ENCODE measurements at regions of chr12 and their contacts with region 1.

Region 1: DNA sequence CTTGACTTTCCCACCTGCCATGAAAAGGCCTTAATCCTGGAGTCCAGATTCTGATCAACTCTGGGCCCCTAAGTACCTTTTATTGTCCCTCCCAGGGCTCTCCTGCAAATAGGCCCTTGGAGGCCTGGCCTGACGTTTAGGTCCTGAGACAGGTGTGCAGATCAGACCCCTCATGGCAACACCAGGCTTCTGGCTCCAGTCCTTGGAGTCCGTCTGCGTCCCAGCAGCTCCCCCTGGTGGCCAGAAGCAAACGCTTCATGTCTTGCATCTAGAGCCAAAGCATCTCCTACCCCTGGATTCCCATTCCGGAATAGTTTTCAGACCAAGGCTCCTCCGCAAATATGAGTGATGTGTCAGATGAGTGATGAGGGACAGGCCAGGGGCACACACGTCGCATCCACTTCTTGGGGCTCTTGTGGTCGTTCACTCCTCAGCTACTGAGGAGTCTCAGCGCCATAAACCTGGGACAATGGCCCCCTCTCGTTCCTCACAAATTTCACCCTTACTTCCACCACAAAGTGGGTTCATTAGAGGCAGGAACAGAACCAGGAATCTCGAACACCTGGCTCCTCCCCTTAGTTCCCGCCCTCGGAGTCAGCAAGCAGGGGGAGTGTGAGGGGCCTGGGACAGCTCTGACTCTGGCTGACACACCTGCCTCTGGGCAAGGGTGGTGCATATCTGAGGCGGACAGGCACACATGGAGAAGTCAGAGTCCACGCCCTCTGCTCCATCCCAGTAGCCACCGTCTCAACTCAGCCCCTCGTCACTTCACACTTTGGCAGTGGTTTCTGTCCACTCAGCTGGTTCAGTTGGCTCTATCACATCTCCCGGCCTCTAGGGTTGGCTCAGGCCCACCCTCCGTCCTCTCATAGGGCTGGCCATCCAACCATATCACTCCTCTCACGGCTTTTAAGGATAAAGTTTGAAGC is 77.9 kb upstream of the PWP1 start:
- DNase-seq: peak; percentile 67 to 92 (median 82)
- H3K4me3 ChIP-seq: no peak overlapping the region
- H3K27ac ChIP-seq: no peak overlapping the region
- H3K4me1 ChIP-seq: no peaks in the 10 kb centered on the region
- H3K27me3 ChIP-seq: no peaks in the 10 kb centered on the region
- CTCF ChIP-seq: peak; percentile 80 to 96 (median 90)
- POLR2A ChIP-seq: no peak

Region 2: GRCh38 chr12:107131832-107132616 is 475.7 kb before region 1 on chr12:
- intact Hi-C with region 1: loop called (anchors 2 to 5 kb)
- DNase-seq: peak in 6 of 7 donors; percentile 16 to 52 (median 28)
- H3K4me3 ChIP-seq: no peak overlapping the region
- H3K27ac ChIP-seq: no peak overlapping the region
- H3K4me1 ChIP-seq: no peaks in the 10 kb centered on the region
- H3K27me3 ChIP-seq: no peaks in the 10 kb centered on the region
- CTCF ChIP-seq: peak; percentile 44 to 86 (median 82)
- POLR2A ChIP-seq: no peak

Region 3: DNA sequence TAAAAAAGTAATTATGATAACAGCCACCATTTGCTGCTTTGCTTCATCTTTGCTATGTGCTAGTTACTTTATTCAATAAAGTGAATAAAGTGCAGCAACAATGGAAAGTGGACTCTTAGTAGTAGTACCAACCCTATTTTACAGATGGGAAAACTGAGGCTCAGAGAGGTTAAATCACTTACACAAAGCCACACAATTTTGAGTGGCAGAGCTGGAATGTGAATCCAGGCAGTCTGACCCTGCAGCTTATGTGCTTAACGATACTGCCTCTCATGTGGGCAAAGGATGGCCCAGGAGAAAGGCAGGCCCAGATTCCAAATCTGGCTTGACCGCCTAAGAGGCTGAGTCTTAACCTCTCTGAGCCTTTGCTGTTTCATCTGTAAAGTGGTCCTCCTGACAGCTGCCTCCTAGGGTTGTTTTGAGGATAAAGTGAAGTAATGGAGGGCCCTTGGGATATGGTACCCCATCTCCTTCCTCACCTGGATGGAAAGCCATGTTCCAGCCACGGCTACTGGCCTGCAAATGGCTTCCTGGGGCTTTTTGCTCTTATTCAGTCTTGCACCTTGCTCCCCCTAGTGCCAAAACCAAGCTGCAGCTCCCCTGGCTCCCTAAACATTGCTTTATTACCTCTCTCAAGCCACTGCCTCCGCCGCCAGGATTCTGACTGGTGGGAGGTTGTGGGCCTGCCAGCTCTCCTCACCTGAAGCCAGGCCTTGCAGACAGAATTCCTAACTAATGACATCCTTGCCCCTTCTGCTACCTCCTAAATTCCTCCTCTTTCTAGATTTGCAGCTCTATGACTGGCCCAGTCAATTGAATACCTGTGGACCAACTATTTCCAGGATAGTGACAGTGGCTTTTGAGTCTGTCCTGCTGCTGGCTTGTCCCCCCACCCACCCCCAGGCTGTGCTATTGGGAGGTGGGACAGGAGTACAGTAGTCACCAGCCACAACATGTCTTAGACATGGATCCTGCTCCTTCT is 205.4 kb before region 1 on chr12:
- intact Hi-C with region 1: loop called (anchors 10 kb)
- DNase-seq: peak; percentile 42 to 80 (median 66)
- H3K4me3 ChIP-seq: no peak overlapping the region
- H3K27ac ChIP-seq: no peak overlapping the region
- H3K4me1 ChIP-seq: no peaks in the 10 kb centered on the region
- H3K27me3 ChIP-seq: no peaks in the 10 kb centered on the region
- CTCF ChIP-seq: peak; percentile 45 to 59 (median 54)
- POLR2A ChIP-seq: no peak

Region 4: GRCh38 chr12:107448198-107448597 is 159.5 kb before region 1 on chr12:
- intact Hi-C with region 1: loop called in 1 of 2 experiments (anchors 5 kb)
- DNase-seq: peak in 6 of 7 donors; percentile 26 to 64 (median 51)
- H3K4me3 ChIP-seq: no peak overlapping the region
- H3K27ac ChIP-seq: no peak overlapping the region
- H3K4me1 ChIP-seq: no peaks in the 10 kb centered on the region
- H3K27me3 ChIP-seq: no peaks in the 10 kb centered on the region
- CTCF ChIP-seq: peak; percentile 32 to 59 (median 50)
- POLR2A ChIP-seq: no peak

Region 5: DNA sequence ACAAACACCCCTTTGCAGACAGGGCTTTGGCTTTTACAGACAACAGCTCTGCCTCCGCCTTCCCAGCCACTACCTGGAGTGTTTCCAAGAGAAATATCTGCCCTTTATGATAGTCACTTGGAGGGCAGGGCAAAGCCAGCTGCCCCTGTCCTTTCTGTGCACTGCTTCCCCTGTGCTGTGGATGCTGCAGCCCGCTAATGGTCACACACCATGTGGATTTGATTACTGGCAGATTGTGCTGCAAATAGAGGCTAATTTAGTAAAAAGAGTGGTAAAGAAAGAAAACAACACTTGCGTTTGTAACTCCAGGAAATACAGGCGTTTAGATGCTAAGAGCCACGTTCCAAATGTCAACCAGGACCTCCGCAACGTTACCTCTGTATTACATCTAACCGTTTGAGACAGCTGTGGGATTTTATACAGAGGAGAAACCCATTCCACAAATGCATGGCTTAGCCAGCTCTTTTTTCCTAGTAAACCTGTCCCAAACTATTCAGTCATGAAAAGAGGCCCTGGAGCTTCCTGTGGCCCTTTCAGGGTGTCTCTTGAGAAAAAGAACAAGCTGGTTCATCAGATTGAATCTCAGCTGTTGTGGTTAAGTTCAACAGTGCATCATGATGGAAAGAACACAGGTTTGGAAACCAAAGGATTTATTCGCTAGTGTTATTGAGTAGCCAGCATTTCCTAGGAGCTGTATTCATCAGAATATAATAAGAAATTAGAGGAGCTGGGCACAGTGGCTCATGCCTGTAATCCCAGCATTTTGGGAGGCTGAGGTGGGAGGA is 47.7 kb after region 1 on chr12:
- intact Hi-C with region 1: no loop called
- DNase-seq: no peak
- H3K4me3 ChIP-seq: no peak overlapping the region
- H3K27ac ChIP-seq: no peak overlapping the region
- H3K4me1 ChIP-seq: no peaks in the 10 kb centered on the region
- H3K27me3 ChIP-seq: no peaks in the 10 kb centered on the region
- CTCF ChIP-seq: no peak
- POLR2A ChIP-seq: no peak

Region 6: GRCh38 chr12:107760809-107761501 is 153.2 kb after region 1 on chr12 and contains the start of gene PRDM4:
- intact Hi-C with region 1: no loop called
- DNase-seq: peak; percentile 93 to 97 (median 95)
- H3K4me3 ChIP-seq: peak within 1 kb of the TSS; percentile 63 to 93 (median 78)
- H3K27ac ChIP-seq: peak within 1 kb of the TSS in 4 of 5 donors; percentile 46 to 93 (median 76)
- H3K4me1 ChIP-seq: peaks cover 19 to 33% of the 10 kb centered on the region in 2 donors
- H3K27me3 ChIP-seq: no peaks in the 10 kb centered on the region
- CTCF ChIP-seq: peak in 2 of 6 experiments; percentile 19 to 51
- POLR2A ChIP-seq: peak; percentile 92
- total RNA-seq, gene PRDM4: 16.0 to 31.5 (median 22.3) TPM